Ovary (tissue), 10 donors: ENCODE measurements at regions of chr3 and their contacts with region 1.

Region 1: DNA sequence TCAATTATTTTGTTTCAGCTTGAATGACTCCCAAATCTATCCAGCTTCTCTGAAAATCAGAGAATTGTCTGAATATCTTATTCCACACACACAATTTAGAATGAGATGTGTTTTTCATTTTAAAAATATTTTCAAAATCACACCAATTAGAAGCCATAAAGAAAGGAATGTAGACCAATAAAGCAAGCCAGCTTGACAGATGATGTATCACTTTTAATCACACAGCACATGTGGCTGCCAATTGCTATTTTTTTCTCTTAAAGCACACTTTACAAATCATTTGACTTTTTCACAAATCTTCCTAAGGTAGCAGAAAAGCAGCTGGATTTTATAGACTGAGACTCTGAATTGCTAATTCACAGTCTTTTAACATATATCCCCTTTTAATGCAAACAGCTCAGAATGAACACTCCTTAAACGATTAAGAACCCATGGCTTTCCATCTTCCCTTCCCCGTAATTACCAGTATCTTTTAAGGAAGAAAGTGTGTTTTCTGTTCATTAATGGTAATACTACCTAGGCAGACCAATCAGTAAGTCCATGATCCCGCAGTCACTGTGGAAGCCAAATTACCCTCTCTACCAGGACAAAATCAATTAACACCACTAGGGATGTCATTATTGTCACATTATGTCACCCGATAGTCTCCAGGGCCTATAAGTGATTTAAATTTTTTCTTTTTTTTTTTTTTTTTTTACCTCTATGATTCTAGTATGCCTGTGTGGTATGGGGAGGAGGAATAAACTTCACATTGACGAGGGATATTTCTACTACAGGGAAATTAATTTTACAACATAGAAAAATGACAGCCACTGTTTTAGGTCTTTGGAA is 250.0 kb upstream of the VEPH1 start:
- DNase-seq: no peak
- H3K4me3 ChIP-seq: no peak overlapping the region
- H3K27ac ChIP-seq: no peak overlapping the region
- H3K4me1 ChIP-seq: no peaks in the 10 kb centered on the region
- H3K27me3 ChIP-seq: no peaks in the 10 kb centered on the region
- CTCF ChIP-seq: no peak
- EP300 ChIP-seq: no peak
- POLR2A ChIP-seq: no peak

Region 2: GRCh38 chr3:157683660-157684059 is 69.5 kb before region 1 on chr3:
- intact Hi-C with region 1: loop called in 1 of 4 experiments (anchors 2 kb)
- DNase-seq: no peak
- H3K4me3 ChIP-seq: no peak overlapping the region
- H3K27ac ChIP-seq: no peak overlapping the region
- H3K4me1 ChIP-seq: no peaks in the 10 kb centered on the region
- H3K27me3 ChIP-seq: no peaks in the 10 kb centered on the region
- CTCF ChIP-seq: no peak
- EP300 ChIP-seq: no peak
- POLR2A ChIP-seq: no peak